Mammary epithelial cell (primary cell): ENCODE measurements at regions of chr2 and their contacts with region 1.

Region 1: GRCh38 chr2:152925547-152926327 is 207.3 kb downstream of the ARL6IP6 start:
- DNase-seq: peak; percentile 62
- H3K4me3 ChIP-seq: no peak overlapping the region
- H3K27ac ChIP-seq: peak overlapping the region; percentile 33
- H3K4me1 ChIP-seq: peaks cover 22% of the 10 kb centered on the region
- H3K27me3 ChIP-seq: no peaks in the 10 kb centered on the region
- CTCF ChIP-seq: peak; percentile 80 to 86

Region 2: DNA sequence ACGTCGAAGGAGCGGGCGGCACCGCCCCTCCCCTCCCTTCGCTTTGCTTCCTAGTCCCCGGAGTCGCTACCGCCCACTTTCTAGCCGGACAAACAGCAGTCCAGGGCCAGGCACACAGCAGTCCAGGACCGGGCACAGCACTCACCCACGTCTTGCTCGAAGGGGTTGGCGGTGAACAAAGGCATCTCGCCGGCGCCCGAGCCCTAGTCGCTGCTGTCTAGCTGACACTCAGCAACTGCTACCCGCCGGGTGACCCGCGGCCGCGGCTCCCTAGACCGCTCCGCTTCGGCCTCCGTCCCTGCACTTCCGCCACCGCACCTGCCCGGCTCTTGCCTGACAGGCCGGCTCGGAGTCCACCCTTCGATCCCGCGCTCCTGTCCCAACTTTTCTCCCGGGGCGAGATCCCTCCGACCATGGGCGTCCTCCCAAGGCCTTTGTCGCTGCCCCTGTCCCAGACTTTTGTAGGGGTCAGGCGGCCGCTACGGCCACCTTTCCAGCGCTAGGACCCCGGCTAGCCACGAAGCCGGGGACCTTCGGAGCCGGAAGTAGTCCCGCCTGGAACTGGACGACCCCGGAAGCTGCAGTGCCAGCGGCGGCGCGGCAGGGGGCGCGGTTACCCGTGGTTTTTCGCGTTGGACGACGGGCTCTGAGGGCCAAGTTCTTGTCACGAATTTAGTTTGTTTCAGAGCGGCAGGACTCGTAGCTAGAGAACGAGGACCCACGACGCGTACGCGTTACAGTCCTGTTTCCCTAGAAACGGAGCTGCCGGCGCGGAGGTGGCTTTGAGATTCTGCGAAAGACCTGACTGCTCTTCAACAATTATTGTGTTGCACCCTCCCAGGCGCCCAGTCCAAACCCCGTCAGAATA is 750.0 kb before region 1 on chr2 and contains the start of gene STAM2:
- CTCF ChIA-PET with region 1: no interaction called
- dilution Hi-C with region 1: no loop called
- in situ Hi-C with region 1: no loop called
- intact Hi-C with region 1: loop called (anchors 10 kb)
- DNase-seq: peak; percentile 90
- H3K4me3 ChIP-seq: peak within 1 kb of the TSS; percentile 75 to 81 (median 80)
- H3K27ac ChIP-seq: peak within 1 kb of the TSS; percentile 83
- H3K4me1 ChIP-seq: peaks cover 26% of the 10 kb centered on the region
- H3K27me3 ChIP-seq: no peaks in the 10 kb centered on the region
- CTCF ChIP-seq: peak; percentile 90 to 98
- total RNA-seq, gene STAM2: 23.8 to 27.3 TPM

Region 3: GRCh38 chr2:153163058-153163457 is 237.3 kb after region 1 on chr2:
- CTCF ChIA-PET with region 1: interaction called, 4 read pairs
- dilution Hi-C with region 1: no loop called
- in situ Hi-C with region 1: no loop called
- intact Hi-C with region 1: loop called (anchors 1 kb)
- DNase-seq: peak; percentile 14
- H3K4me3 ChIP-seq: no peak overlapping the region
- H3K27ac ChIP-seq: no peak overlapping the region
- H3K4me1 ChIP-seq: no peaks in the 10 kb centered on the region
- H3K27me3 ChIP-seq: no peaks in the 10 kb centered on the region
- CTCF ChIP-seq: peak; percentile 53 to 70

Region 4: DNA sequence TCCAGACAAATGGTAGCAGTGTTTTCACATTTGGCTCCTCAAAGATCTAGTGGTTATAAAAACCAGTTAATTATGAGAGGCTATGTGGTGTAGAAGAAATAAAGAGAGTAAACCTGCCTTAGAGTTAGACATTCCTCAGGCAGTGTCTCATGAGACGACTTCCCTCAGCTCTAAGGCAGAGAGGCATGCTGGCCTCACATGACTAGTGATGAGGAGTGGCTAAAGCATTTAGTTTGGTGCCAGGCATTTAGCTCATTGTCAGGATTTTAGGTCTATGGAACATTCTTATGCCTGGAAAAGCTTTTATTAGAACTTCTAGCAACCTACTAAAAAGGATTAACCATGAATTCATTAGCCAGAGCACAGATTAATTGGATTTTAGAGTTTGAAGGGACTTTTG is 462.5 kb after region 1 on chr2:
- CTCF ChIA-PET with region 1: no interaction called
- dilution Hi-C with region 1: no loop called
- in situ Hi-C with region 1: no loop called
- intact Hi-C with region 1: loop called (anchors 10 kb)
- DNase-seq: peak; percentile 62
- H3K4me3 ChIP-seq: no peak overlapping the region
- H3K27ac ChIP-seq: no peak overlapping the region
- H3K4me1 ChIP-seq: peaks cover 24% of the 10 kb centered on the region
- H3K27me3 ChIP-seq: no peaks in the 10 kb centered on the region
- CTCF ChIP-seq: no peak

Region 5: DNA sequence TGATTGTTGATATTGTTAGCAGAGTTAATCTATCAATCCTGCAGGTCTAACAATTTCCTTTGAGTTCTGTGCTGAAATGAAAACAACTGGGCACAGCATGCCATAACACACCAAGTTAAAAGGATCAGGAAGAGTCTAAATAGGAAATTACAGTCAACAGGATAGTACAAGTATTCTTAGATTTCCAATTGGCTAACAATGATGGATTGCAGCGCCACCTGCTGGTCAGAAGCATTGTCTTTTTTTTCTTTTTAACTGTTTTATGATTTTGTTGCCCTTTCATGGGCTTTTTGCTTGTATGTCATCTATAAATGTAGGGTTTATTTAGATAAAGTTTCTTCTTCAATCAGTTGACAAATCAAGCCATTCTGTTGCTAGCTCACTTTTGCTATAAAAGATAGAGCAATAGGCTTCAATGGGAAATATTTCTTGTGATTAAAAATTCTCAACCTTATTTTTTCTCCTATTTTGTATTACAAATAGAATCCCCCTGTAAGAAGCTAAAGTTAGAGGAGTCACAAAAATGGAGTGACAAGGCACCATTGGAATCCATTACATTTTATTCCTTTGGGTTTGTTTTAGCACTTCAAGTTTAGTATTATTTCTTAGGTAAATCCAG is 593.6 kb after region 1 on chr2:
- CTCF ChIA-PET with region 1: no interaction called
- dilution Hi-C with region 1: no loop called
- in situ Hi-C with region 1: no loop called
- intact Hi-C with region 1: loop called (anchors 1 kb)
- DNase-seq: peak; percentile 36
- H3K4me3 ChIP-seq: no peak overlapping the region
- H3K27ac ChIP-seq: no peak overlapping the region
- H3K4me1 ChIP-seq: no peaks in the 10 kb centered on the region
- H3K27me3 ChIP-seq: no peaks in the 10 kb centered on the region
- CTCF ChIP-seq: peak; percentile 67 to 70